ENCODE measurements at regions of chrX and their contacts with region 1.

Region 1: GRCh38 chrX:130916636-130917422 is 13.8 kb upstream of the ENOX2 start:
- DNase-seq: peak in 6 of 10 donors; percentile 12 to 84 (median 26)

Region 2: DNA sequence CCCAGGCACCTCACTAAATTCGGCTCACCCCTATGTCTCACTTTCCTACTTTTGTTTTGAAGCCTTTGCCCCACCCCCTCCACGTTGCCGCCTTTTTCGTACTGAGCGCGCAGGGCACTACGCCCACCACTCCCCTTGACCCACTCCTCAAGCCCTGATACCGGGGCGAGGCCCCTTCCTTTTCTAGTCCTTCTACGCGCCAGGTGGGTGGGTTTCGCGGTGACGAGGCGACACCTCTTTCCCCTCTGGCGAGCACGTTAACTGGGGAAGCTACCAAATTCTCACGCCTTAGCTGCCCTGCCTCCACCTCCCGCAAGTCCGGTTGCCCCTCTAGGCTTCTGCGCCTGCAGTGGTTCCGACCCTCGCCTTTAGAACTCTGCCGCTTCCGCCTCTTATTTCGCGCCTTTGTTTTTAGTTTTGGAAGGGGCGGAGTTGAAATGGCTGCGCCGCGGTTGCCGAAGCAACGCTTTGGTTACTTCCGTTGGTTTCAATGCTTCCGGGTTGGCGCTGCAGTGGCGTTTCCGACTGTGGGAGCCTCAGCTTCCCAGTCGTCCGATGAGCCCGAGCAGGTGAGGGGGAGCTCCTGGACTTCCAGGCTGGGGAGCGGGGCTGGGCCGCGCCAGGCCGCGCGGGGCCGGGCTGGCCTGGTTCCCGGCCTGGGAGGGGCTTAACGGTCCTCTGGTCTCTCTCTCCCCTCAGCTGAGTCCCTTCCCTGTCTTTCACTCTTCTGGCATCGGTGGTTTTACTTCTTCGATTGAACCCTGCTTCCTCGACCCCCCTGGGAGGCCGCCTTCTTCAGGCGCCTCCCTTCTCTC is 577.2 kb before region 1 on chrX and contains the start of gene SLC25A14:
- intact Hi-C with region 1: loop called (anchors 10 kb)
- DNase-seq: peak; percentile 46 to 94 (median 68)

Region 3: GRCh38 chrX:130393451-130394074 is 523.3 kb before region 1 on chrX:
- intact Hi-C with region 1: loop called (anchors 2 kb)
- DNase-seq: peak; percentile 26 to 95 (median 66)

Region 4: GRCh38 chrX:130539721-130540321 is 377.0 kb before region 1 on chrX:
- intact Hi-C with region 1: loop called (anchors 2 kb)
- DNase-seq: peak in 6 of 10 donors; percentile 19 to 60 (median 43)

Region 5: GRCh38 chrX:130575831-130576389 is 340.9 kb before region 1 on chrX:
- intact Hi-C with region 1: loop called (anchors 2 kb)
- DNase-seq: peak in 8 of 10 donors; percentile 6 to 86 (median 40)

Region 6: DNA sequence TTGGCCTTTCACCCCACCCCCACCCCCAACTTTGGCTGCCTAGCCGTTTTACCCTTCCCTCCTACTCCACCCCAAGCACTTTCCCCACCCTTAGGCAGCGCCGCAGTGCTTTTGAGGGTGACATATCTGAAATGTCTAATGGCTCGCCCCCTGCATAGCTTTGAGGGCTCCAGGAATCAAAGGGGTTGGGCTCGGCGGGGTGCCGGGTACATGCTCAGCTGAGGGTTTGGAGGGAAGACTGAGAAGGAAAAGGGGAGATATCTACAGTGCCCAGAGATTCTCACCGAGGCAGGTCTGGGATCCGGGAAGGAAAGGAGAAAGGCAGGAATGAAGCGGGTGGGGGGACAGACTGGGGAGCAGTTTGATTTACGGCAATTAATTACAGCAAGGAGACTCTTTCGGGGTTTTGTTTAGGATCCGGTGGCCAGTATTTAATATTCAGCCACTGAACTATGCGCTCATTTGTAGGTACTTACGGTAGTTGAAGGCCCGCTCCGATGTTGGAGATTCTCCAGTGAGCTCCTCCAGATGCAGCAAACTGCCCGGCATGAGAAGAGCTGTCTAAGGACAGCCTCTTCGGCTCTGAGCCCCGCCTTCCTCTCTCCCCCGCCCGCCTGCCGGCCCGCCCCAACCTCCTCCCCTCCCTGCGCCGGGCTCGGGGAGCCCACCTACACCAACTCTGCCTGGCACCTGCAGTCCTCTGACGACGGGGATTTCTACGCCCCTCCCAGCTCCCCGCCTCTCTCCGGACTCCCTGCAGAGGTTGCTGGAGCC is 372.1 kb after region 1 on chrX and contains the start of gene IGSF1:
- intact Hi-C with region 1: no loop called
- DNase-seq: peak; percentile 19 to 93 (median 54)

Measured in posterior cingulate gyrus (tissue), 11 donors.